ENCODE measurements at regions of chr22 and their contacts with region 1.

Region 1: DNA sequence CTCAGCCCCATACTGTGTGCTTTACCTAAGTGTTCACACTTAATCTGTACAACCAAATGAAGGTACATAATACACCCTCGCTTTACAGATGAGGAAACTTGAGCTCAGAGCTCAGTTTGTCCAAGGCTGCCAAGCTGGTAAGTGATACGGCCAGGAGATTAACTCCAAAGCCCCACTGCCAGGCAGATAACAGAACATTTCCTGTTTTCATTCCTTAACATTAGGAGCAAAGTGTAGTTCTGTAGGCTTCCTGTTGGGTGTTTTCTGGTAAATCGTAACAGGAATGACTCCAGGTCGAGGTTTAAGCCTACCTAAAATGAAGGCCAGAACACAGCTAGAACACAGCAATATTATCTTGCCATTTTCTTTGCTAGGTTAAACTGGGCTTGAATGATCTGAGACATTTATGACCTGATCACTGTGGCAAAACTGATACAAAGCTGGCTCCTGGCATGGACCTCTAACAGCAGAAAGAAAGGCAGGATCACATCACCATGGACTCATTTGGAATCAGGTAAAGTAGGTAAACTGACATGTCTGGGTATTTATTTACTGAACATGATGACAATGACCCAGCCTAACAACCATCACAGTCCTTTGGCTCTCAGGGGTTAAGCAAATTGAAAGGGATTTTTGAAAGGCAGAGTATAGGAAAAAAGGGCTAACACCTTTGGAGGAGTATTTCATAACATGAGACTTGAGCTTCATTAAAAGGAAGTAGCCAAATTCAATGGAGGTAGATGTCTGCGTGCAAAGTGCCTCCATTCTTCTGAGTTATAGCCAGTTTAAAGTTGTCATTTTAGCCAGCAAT is 3.9 kb upstream of the NUP50 start:
- DNase-seq: no peak
- H3K4me3 ChIP-seq: no peak overlapping the region
- H3K27ac ChIP-seq: peak overlapping the region; percentile 65
- H3K4me1 ChIP-seq: peaks cover 55% of the 10 kb centered on the region
- H3K27me3 ChIP-seq: no peaks in the 10 kb centered on the region
- CTCF ChIP-seq: no peak
- POLR2A ChIP-seq: no peak

Region 2: GRCh38 chr22:43826142-43827002 is 1333.5 kb before region 1 on chr22:
- intact Hi-C with region 1: loop called (anchors 5 kb)
- DNase-seq: no peak
- H3K4me3 ChIP-seq: no peak overlapping the region
- H3K27ac ChIP-seq: no peak overlapping the region
- H3K4me1 ChIP-seq: peaks cover 23% of the 10 kb centered on the region
- H3K27me3 ChIP-seq: no peaks in the 10 kb centered on the region
- CTCF ChIP-seq: no peak
- POLR2A ChIP-seq: no peak

Measured in vagina (tissue), 2 donors.